ENCODE measurements at regions of chr2 and their contacts with region 1.

Region 1: DNA sequence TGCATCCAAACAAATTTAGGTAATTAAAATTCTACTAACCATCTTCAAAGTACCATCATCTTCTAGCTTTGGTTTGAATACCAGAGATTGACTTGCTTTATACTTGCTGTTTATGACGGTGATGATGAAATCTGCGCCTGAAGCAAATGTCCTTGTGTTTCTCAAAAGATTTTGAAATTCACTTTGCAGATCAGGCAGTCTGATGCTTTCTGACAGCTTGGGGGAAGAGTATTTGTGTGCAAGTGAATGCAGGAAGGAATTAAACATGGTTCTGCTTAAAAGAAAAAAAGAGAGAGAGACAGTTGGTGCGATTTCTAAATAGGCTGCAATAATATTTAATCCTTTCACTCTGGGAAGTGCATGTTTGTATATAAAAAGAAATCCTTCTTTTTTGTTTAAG is 29.6 kb downstream of the CSRNP3 start:
- DNase-seq: no peak
- ATAC-seq: no peak
- H3K4me3 ChIP-seq: no peak overlapping the region
- H3K4me3 Mint-ChIP-seq: no peak overlapping the region
- H3K27ac ChIP-seq: no peak overlapping the region
- H3K27ac Mint-ChIP-seq: no peak overlapping the region
- H3K4me1 ChIP-seq: no peaks in the 10 kb centered on the region
- H3K4me1 Mint-ChIP-seq: no peaks in the 10 kb centered on the region
- H3K27me3 ChIP-seq: no peaks in the 10 kb centered on the region
- H3K27me3 Mint-ChIP-seq: no peaks in the 10 kb centered on the region
- CTCF ChIP-seq: no peak

Region 2: DNA sequence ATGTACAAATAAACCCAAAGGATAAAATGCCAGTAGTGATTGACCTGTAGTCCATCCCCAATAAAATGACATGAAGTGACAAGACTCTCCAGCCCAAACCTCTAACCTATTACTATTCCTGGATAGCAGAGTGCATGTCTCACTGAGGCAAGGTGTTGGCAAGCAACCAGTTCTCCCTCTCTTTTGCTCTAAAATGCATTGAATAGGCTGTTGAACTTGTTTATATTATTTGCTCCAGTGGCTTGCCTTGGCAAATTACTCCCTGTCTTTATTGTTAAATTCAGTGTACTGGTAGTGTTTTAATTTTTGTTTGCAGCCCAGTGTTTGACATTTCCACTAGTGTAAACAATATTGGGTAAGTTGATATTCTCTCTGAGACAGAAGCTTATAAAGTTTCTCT is 40.9 kb after region 1 on chr2:
- CTCF ChIA-PET with region 1: no interaction called
- POLR2A ChIA-PET with region 1: no interaction called
- intact Hi-C with region 1: no loop called
- DNase-seq: no peak
- ATAC-seq: no peak
- H3K4me3 ChIP-seq: no peak overlapping the region
- H3K4me3 Mint-ChIP-seq: no peak overlapping the region
- H3K27ac ChIP-seq: no peak overlapping the region
- H3K27ac Mint-ChIP-seq: no peak overlapping the region
- H3K4me1 ChIP-seq: no peaks in the 10 kb centered on the region
- H3K4me1 Mint-ChIP-seq: no peaks in the 10 kb centered on the region
- H3K27me3 ChIP-seq: no peaks in the 10 kb centered on the region
- H3K27me3 Mint-ChIP-seq: no peaks in the 10 kb centered on the region
- CTCF ChIP-seq: no peak

Region 3: DNA sequence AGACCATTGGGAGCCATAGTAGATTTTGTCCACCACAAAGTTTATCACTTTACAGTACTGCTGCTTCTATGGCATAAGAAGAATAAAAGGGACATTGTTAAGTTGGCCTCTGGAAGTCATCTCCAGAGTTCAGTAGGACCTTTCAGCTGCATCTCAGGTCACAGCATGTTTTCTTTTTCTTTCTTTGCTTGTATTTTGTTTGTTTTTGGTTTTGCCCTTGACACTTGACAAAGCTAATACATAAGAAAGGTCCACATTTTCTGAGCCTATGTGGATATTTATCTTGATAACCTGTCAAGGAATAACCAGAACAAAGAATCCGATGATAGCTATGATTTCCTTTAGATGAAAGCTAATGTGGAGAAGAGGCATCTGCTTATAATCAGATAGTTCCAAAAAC is 1287.6 kb after region 1 on chr2:
- CTCF ChIA-PET with region 1: no interaction called
- POLR2A ChIA-PET with region 1: no interaction called
- intact Hi-C with region 1: loop called in 1 of 2 experiments (anchors 5 kb)
- DNase-seq: no peak
- ATAC-seq: no peak
- H3K4me3 ChIP-seq: no peak overlapping the region
- H3K4me3 Mint-ChIP-seq: no peak overlapping the region
- H3K27ac ChIP-seq: no peak overlapping the region
- H3K27ac Mint-ChIP-seq: no peak overlapping the region
- H3K4me1 ChIP-seq: no peaks in the 10 kb centered on the region
- H3K4me1 Mint-ChIP-seq: no peaks in the 10 kb centered on the region
- H3K27me3 ChIP-seq: no peaks in the 10 kb centered on the region
- H3K27me3 Mint-ChIP-seq: no peaks in the 10 kb centered on the region
- CTCF ChIP-seq: no peak